Sciatic nerve (tissue), 2 donors: ENCODE measurements at regions of chr20 and their contacts with region 1.

Region 1: GRCh38 chr20:37327748-37328147 is 18.2 kb upstream of the SRC start:
- DNase-seq: peak; percentile 81
- ATAC-seq: peak; percentile 94

Region 2: DNA sequence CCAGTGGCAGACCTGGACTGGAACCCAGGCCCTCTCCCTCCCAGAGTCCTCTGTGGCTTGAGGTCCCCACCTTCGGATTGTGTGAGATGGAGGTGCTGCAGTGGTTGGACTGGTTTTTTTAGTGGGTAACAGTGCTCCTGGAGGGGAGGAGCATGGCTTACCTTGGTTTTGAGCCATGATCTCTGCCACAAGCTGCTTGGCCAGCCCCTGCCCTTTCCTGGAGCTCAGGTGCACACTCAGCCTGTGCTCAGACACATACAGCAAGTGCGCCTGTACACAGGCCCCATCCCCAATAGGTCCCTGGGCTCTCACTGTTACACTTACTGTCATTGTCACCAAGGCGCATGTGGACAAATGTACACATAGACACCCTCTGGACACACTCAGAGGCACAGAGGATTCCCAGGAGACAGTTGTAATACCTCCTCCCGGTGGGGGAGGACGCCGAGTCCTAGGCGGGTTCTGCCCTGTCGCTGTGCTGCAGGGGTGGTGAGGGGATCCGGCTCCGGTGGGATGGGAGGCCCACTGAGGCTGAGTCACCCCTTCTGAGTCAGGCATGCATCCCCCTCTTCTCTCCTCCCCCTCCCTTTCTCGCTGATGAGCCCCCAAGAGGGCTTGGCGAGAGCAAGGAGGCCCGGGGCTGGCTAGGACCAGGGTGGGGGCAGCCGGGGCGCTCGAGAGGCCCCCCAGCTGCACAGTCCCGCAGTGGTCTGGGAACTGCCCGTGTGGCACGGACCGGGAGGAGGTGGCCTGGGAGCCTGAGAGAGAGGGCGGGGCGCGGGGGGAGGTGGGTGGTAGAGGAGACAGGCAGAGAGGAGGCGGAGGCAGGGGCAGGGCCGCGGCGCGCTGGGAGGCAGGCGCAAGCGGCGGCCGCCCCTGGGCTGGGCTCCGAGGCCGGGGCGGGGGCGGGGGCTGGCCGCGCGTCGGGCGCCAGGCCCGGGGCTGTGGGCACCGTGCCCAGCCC is 1173.7 kb before region 1 on chr20:
- intact Hi-C with region 1: loop called (anchors 10 kb)
- DNase-seq: peak; percentile 90
- ATAC-seq: peak; percentile 89

Region 3: DNA sequence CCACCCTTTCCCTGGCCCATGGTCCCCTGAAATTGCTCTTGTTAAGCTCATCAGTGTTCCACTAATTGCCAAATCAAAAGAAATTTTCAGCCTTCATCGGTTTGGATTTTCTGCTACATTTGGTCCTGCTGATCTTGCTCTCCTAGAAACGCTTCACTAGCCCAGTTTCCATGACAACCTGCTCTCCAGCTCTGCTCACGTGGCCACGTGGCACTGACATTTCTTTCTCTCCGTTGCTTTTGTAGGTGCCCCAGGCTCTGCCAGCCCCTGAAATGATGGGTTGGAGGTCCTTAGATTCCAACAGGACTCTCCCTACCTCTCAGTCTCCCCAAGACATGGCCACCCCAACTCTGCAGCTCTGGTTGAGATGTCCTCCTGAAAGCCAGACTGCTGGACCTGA is 147.5 kb after region 1 on chr20:
- intact Hi-C with region 1: no loop called
- DNase-seq: no peak
- ATAC-seq: no peak

Region 4: DNA sequence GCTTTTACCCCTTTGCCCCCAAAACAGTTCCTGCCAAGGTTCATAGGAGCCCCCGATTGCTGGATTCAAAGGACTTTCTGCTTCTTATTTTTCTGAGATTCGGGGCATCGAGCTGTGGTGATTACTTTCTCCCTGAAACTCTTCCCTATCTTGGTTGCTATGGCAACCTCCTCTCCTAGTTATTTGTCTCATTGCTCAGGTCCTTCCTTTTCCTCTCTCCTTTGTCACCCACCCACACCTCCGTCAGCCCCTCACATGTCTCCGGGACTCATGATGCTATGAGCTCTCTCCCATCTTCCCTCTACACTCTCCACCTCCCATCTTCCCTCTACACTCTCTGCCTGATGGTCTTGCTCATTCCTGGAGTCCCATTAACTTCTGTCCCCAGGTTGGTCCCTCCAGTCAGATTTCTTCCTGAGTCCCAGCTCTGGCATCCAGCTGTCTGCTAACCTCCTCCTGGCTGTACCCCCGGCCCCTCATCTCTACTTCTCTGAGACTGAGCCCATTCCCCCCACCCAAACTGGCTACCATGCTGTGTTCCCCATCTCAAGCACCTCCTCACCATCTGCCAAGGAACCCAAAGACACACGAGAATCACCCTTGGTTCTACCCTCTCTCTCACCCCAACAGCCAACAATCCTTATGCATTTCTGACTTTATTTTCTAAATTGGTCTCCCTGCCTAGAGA is 163.1 kb after region 1 on chr20:
- intact Hi-C with region 1: no loop called
- DNase-seq: no peak
- ATAC-seq: no peak